ENCODE measurements at regions of chr5 and their contacts with region 1.

Region 1: GRCh38 chr5:80268916-80269315 is 13.1 kb upstream of the SERINC5 start:
- DNase-seq: no peak
- ATAC-seq: peak; percentile 35
- H3K4me3 ChIP-seq: no peak overlapping the region
- H3K4me3 Mint-ChIP-seq: peak overlapping the region; percentile 81
- H3K27ac ChIP-seq: peak overlapping the region in 1 of 2 donors; percentile 5
- H3K27ac Mint-ChIP-seq: peak overlapping the region; percentile 99
- H3K4me1 ChIP-seq: peaks cover 40% of the 10 kb centered on the region
- H3K4me1 Mint-ChIP-seq: peaks cover 56% of the 10 kb centered on the region
- H3K27me3 ChIP-seq: no peaks in the 10 kb centered on the region
- H3K27me3 Mint-ChIP-seq: no peaks in the 10 kb centered on the region
- CTCF ChIP-seq: no peak

Region 2: DNA sequence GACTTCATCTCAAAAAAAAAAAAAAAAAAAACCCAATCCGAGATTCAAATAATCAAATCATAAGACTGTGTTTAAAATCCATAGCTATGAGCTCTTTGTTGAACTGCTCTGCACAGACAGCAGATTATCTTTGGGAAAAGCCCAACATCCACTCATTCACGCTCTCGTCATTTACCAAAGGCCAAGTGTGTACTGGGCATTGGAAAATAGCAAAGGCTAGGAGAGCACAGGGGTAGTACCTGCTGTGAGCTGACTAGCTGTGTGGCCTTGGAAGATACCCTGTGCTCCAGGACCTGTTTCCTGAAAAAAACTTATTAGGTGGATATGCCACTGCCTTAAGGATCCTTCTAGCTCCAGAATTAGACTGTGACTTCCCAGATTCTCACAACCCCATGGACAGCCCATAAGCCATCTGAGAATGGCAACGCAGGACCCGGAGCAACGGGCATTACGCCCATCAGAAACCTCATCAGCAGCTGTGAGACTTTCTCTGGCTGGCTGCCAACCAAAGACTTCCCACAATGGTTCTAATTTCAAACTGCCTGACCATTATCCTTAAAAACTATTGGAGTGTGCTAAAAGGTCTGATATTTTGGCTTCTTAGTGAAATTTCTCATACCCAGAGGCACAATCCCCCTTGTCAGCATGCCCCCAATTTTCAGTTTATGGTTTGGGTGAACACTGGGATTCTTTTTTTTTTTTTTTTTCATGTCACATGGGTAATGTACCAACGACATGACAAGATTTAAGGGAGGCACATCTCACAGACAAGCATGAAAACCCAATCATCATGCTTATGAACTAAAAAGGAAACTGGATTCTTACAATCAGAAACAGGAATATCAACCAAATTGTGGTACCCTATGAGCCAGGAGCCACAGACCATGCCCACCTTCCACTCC is 29.9 kb before region 1 on chr5:
- CTCF ChIA-PET with region 1: no interaction called
- POLR2A ChIA-PET with region 1: no interaction called
- intact Hi-C with region 1: loop called in 1 of 2 experiments (anchors 5 kb)
- DNase-seq: peak in 3 of 14 experiments; percentile 49 to 58 (median 53)
- ATAC-seq: peak; percentile 27
- H3K4me3 ChIP-seq: peak overlapping the region; percentile 4
- H3K4me3 Mint-ChIP-seq: peak overlapping the region; percentile 80
- H3K27ac ChIP-seq: peak overlapping the region; percentile 6 to 32
- H3K27ac Mint-ChIP-seq: peak overlapping the region; percentile 70
- H3K4me1 ChIP-seq: peaks cover 55% of the 10 kb centered on the region
- H3K4me1 Mint-ChIP-seq: peaks cover 80% of the 10 kb centered on the region
- H3K27me3 ChIP-seq: no peaks in the 10 kb centered on the region
- H3K27me3 Mint-ChIP-seq: no peaks in the 10 kb centered on the region
- CTCF ChIP-seq: no peak

Region 3: DNA sequence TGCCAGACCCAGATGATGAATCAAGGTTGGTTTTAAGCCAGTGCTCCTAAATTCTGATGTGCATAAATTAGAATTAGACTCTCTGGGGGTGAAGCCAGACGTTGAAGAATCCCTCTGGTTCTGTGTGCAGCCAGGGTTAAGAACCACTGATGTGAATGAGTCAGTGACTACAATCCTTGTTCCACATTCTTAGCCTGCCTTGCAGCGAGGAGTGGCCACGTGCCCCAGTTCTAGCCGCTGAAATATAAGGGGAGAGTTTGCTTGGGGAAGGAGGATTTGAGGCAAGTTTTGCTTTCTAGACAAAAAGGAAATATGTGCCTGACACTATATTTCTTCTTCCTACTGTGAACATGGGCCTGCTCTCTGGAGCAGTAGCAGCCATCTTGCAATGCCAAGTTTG is 351.3 kb after region 1 on chr5:
- CTCF ChIA-PET with region 1: no interaction called
- POLR2A ChIA-PET with region 1: no interaction called
- intact Hi-C with region 1: no loop called
- DNase-seq: peak in 1 of 14 experiments; percentile 4
- ATAC-seq: no peak
- H3K4me3 ChIP-seq: no peak overlapping the region
- H3K4me3 Mint-ChIP-seq: no peak overlapping the region
- H3K27ac ChIP-seq: no peak overlapping the region
- H3K27ac Mint-ChIP-seq: no peak overlapping the region
- H3K4me1 ChIP-seq: no peaks in the 10 kb centered on the region
- H3K4me1 Mint-ChIP-seq: no peaks in the 10 kb centered on the region
- H3K27me3 ChIP-seq: no peaks in the 10 kb centered on the region
- H3K27me3 Mint-ChIP-seq: no peaks in the 10 kb centered on the region
- CTCF ChIP-seq: no peak